ENCODE measurements at regions of chr11 and their contacts with region 1.

Region 1: DNA sequence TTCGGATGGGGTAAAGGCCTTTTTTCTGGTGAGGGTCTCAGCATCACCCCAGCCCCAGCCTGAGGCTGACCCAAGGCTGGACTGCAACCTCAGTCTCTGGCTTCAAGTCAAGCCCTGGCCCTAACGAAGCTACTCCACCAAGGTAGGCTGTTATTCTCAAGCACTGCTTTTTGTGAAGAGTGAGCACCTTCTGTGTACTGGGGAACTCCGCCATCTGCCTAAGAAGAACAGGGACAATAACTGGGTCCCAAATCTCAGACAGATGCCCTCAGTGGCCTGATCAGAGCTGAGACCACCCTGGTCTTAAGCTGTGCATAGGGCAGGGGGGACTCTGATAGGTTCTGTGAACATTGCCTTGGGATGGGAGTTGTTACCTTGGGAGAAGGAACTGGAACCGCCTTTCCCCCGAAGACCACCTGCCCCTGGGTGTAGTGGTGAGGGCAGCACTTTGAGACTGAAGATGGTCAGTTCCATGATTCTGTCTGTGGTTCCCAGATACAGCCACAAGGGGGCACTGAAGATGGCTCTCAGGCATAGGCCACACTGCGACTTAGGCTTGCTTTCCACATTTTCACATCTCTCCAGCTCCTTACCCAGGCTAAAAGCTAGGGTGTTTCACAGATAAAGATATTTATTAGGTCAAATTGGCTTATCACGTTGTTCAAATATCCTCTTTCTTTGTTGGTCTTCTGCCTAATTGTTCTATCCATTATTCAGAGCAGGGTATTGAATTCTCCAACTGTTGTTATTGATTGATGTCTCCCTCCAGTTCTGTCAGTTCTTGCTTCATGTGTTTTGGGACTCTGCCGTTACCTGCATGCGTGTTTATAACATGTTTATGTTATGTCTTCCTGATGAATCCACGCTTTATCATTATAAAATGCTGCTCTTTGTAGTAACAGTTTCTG is 11.8 kb upstream of the UVRAG start:
- DNase-seq: peak; percentile 83 to 90
- H3K4me3 ChIP-seq: no peak overlapping the region
- H3K27ac ChIP-seq: no peak overlapping the region
- H3K4me1 ChIP-seq: peaks cover 0 to 19% (median 0%) of the 10 kb centered on the region in 4 donors
- H3K27me3 ChIP-seq: no peaks in the 10 kb centered on the region
- CTCF ChIP-seq: peak in 5 of 7 experiments; percentile 86 to 90 (median 89)
- EP300 ChIP-seq: no peak
- POLR2A ChIP-seq: no peak

Region 2: GRCh38 chr11:75223954-75224643 is 579.1 kb before region 1 on chr11:
- intact Hi-C with region 1: no loop called
- DNase-seq: no peak
- H3K4me3 ChIP-seq: no peak overlapping the region
- H3K27ac ChIP-seq: no peak overlapping the region
- H3K4me1 ChIP-seq: no peaks in the 10 kb centered on the region
- H3K27me3 ChIP-seq: no peaks in the 10 kb centered on the region
- CTCF ChIP-seq: no peak
- EP300 ChIP-seq: no peak
- POLR2A ChIP-seq: no peak

Region 3: DNA sequence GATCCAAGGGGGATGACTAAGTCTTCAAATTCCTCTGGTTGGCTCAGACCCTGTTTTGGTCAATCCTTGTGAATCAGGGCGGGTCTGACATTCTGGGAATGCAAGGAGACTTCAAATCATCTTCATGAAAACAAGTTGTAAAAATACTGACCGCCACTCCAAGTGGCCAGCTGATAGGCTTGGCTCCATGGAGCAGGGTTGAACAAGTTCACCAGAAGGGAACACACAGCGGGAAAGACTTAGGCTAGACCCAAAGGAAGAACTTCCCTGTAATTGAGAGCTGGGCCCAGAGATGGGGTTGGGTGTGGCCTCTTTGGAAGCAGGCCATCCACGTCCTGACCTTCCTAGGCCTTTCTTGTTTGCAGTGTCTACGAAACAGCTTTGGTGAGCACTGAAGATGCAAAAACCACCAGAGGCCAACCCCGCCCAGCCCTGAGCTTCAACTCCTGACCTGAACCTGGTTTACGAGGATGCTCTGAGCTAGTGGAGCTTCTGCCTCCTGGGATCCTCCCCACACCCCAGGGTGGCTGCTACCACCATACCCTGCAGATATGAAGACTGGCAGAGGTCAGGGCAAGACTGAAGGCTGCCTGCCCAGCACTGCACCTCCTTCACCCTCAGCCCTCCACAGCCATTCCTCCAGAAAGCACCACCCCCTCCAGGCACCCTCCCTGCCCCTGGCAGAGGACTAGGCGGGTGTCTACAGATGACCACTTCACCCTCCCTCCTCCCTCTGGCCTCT is 303.5 kb before region 1 on chr11:
- intact Hi-C with region 1: no loop called
- DNase-seq: peak in 1 of 2 donors; percentile 54
- H3K4me3 ChIP-seq: no peak overlapping the region
- H3K27ac ChIP-seq: peak overlapping the region in 3 of 5 donors; percentile 14 to 38 (median 34)
- H3K4me1 ChIP-seq: peaks cover 4 to 14% (median 10%) of the 10 kb centered on the region in 4 donors
- H3K27me3 ChIP-seq: no peaks in the 10 kb centered on the region
- CTCF ChIP-seq: no peak
- EP300 ChIP-seq: no peak
- POLR2A ChIP-seq: no peak

Region 4: DNA sequence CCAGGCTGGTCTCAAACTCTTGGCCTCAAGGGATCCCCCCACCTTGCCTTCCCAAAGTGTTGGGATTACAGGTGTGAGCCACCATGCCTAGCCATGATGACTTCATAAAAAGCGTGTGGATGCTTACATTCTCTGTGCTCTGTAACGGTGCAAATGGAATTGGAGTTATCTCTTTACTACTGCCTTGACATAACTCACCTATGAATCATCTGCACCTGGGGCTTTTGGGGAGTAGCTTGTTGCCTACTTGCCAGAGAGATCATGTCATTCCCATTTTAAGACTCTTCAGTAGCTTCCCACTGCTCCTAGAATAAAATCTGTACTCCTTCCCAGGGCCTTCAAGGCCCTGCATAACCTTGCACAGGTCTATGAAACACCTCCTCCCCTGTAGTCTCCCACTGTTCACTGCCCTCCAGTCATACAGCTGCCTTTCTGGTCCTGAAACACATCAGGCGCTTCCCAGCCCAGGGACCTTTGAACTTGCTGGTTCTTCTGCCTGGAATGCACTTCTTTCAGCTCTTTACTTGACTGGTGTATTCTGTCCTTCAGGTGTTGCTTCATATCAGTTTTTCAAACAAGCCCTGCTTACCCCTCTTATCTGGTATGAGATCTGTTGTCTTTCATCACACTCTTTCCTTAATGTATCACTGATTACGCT is 105.1 kb before region 1 on chr11:
- intact Hi-C with region 1: no loop called
- DNase-seq: no peak
- H3K4me3 ChIP-seq: no peak overlapping the region
- H3K27ac ChIP-seq: no peak overlapping the region
- H3K4me1 ChIP-seq: no peaks in the 10 kb centered on the region
- H3K27me3 ChIP-seq: no peaks in the 10 kb centered on the region
- CTCF ChIP-seq: no peak
- EP300 ChIP-seq: no peak
- POLR2A ChIP-seq: no peak

Region 5: DNA sequence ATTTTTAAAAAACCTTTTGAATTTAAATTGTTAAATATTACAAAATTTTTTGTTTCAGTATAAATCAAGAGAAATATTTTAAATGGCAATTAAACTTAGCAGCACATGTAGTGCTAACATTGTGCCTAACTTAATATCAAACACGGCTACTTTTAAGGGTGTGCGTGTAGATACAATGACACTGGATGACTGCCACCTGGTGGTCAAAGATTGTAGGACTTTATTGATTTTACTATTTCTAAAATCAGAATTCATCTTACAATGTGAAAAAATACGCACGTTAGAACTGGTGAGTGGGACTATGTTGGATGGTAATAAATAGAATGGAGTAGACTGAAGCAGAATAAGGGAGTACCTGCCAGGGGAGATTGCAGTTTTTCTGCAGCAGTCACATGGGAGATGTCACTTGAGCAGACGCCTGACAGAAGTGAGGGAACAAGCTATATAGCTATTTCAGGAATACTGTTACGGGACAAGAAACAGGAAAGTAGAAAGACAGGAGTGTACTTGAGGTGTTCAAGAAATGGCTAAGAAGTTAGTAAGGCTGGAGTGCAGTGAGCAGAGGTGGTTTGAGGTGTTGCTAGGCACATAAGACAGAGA is 64.7 kb after region 1 on chr11:
- intact Hi-C with region 1: loop called (anchors 2 kb)
- DNase-seq: peak; percentile 41 to 80
- H3K4me3 ChIP-seq: no peak overlapping the region
- H3K27ac ChIP-seq: peak overlapping the region in 2 of 5 donors; percentile 32 to 61
- H3K4me1 ChIP-seq: peaks cover 21 to 64% (median 47%) of the 10 kb centered on the region in 4 donors
- H3K27me3 ChIP-seq: no peaks in the 10 kb centered on the region
- CTCF ChIP-seq: peak in 6 of 7 experiments; percentile 19 to 94 (median 70)
- EP300 ChIP-seq: no peak
- POLR2A ChIP-seq: no peak

Region 6: DNA sequence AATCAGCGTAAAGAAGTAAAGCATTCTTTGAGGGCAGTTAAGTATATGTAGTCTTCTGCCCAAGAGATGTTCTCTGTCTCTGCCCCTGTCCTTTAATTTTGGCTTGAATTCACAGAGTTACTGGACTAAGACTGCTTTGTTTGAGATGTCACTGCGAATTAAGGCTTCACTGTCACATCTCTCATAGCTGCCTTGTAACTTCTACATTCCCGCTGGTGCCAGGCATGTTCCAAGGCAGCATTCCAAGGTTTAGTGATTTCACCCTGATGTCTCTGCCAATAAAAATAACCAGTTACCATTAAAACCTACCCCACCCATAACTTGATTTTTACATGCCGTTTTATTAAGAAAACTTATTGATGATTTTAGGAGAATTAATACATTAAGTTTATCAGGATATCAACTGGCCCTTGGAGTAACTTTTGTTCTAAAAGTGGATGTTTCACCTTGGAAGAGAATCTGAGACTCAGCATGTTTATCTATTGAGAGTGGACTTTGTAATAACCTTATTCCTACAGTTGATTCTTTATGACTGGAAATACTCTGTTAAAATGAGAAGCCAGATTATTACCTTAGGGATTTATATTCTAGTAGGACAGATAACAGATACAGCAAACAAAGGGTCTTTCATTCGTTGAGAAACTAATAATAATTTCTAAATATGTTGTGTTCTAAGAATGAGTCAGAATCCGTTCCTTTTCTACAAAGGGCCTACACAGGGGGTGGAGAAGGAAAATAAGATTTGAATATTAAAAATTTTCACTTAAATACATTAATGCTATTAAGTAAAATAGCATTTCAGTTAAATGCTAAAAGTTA is 122.0 kb after region 1 on chr11:
- intact Hi-C with region 1: no loop called
- DNase-seq: no peak
- H3K4me3 ChIP-seq: no peak overlapping the region
- H3K27ac ChIP-seq: no peak overlapping the region
- H3K4me1 ChIP-seq: peaks cover 0 to 33% (median 18%) of the 10 kb centered on the region in 4 donors
- H3K27me3 ChIP-seq: no peaks in the 10 kb centered on the region
- CTCF ChIP-seq: no peak
- EP300 ChIP-seq: no peak
- POLR2A ChIP-seq: no peak